ENCODE measurements at regions of chr21 and their contacts with region 1.

Region 1: DNA sequence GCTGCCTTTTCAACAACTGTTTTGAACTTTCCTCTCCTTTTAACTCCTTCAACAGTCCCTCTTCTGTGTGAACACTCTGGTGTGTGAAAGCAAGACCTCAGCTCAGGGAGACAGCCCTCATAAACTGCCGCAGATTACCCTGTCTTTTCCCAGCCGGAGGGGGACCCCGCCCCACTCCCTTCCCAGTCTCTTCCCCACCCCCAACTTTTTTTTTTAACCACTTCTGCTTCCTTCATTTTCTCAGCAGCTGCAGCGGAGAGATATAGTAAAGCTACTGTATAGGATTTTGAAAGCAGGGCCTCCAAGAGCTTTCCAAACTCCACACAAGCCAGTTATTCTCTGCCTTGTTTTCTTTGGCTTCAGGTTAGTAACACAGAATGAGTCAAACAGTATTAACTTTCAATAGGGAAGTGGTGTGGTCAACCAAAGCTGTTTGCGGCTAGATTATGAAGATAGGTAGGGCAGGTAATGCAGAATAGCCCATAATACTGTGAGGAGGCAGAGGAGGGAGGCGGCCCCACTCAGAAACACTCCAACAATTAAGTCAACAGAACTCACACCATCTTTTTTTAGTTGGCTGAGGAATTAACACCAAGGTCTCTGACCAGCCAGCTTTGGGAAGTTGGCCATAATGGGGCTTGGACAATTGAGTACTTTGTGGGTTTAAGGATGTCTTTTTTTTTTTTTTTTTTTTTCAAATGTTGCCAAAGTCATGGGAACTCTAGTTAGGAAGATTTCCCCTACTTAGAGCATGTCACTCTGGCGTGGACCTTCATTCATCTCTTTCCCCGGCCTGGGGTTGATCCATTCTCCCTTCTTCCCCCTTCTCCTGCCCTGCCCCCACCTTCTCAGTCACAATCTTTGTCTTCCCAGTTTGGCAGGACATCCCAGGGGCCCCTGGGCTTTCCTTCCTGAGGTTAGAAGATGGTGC is 177.0 kb downstream of the CLIC6 start:
- DNase-seq: peak; percentile 94
- H3K4me3 Mint-ChIP-seq: peak overlapping the region; percentile 60
- H3K27ac Mint-ChIP-seq: peak overlapping the region; percentile 92
- H3K4me1 Mint-ChIP-seq: peaks cover 47% of the 10 kb centered on the region
- H3K27me3 Mint-ChIP-seq: no peaks in the 10 kb centered on the region
- CTCF ChIP-seq: no peak

Region 2: DNA sequence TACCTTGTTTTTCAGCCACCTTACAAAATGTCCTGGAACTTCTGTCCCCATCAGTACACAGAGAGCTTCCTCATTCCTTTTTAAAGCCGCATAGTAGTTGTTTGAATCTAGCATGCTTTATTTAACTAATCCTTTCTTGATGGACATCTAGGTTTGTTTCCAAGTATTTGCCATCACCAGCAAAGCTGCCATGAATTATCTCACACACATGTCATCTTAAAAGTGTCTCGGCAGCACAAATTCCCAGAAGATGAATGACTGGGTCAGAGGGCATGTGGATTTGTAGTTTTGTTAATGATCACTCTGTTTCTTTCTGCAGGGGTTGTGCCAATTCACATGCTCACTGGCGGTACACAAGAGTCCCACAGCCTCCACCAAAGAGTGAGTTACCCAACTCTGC is 108.7 kb before region 1 on chr21:
- CTCF ChIA-PET with region 1: no interaction called
- POLR2A ChIA-PET with region 1: interaction called, 25 read pairs
- intact Hi-C with region 1: no loop called
- DNase-seq: peak; percentile 22
- H3K4me3 Mint-ChIP-seq: no peak overlapping the region
- H3K27ac Mint-ChIP-seq: peak overlapping the region; percentile 24
- H3K4me1 Mint-ChIP-seq: peaks cover 49% of the 10 kb centered on the region
- H3K27me3 Mint-ChIP-seq: no peaks in the 10 kb centered on the region
- CTCF ChIP-seq: no peak

Region 3: GRCh38 chr21:34807146-34807880 is 38.5 kb before region 1 on chr21:
- CTCF ChIA-PET with region 1: interaction called, 3 read pairs
- POLR2A ChIA-PET with region 1: interaction called, 304 read pairs
- intact Hi-C with region 1: no loop called
- DNase-seq: peak; percentile 98
- H3K4me3 Mint-ChIP-seq: peak overlapping the region; percentile 47
- H3K27ac Mint-ChIP-seq: peak overlapping the region; percentile 99
- H3K4me1 Mint-ChIP-seq: peaks cover 40% of the 10 kb centered on the region
- H3K27me3 Mint-ChIP-seq: no peaks in the 10 kb centered on the region
- CTCF ChIP-seq: no peak

Region 4: GRCh38 chr21:34857874-34858273 is 12.1 kb after region 1 on chr21:
- CTCF ChIA-PET with region 1: interaction called, 5 read pairs
- POLR2A ChIA-PET with region 1: interaction called, 146 read pairs
- intact Hi-C with region 1: no loop called
- DNase-seq: no peak
- H3K4me3 Mint-ChIP-seq: no peak overlapping the region
- H3K27ac Mint-ChIP-seq: peak overlapping the region; percentile 63
- H3K4me1 Mint-ChIP-seq: peaks cover 35% of the 10 kb centered on the region
- H3K27me3 Mint-ChIP-seq: no peaks in the 10 kb centered on the region
- CTCF ChIP-seq: no peak

Region 5: GRCh38 chr21:34874684-34875513 is 29.1 kb after region 1 on chr21:
- CTCF ChIA-PET with region 1: interaction called, 4 read pairs
- POLR2A ChIA-PET with region 1: interaction called, 274 read pairs
- intact Hi-C with region 1: no loop called
- DNase-seq: no peak
- H3K4me3 Mint-ChIP-seq: no peak overlapping the region
- H3K27ac Mint-ChIP-seq: peak overlapping the region; percentile 97
- H3K4me1 Mint-ChIP-seq: peaks cover 33% of the 10 kb centered on the region
- H3K27me3 Mint-ChIP-seq: no peaks in the 10 kb centered on the region
- CTCF ChIP-seq: no peak

Measured in MCF 10A (cell line).